Mammary epithelial cell (primary cell): ENCODE measurements at regions of chr2 and their contacts with region 1.

Region 1: DNA sequence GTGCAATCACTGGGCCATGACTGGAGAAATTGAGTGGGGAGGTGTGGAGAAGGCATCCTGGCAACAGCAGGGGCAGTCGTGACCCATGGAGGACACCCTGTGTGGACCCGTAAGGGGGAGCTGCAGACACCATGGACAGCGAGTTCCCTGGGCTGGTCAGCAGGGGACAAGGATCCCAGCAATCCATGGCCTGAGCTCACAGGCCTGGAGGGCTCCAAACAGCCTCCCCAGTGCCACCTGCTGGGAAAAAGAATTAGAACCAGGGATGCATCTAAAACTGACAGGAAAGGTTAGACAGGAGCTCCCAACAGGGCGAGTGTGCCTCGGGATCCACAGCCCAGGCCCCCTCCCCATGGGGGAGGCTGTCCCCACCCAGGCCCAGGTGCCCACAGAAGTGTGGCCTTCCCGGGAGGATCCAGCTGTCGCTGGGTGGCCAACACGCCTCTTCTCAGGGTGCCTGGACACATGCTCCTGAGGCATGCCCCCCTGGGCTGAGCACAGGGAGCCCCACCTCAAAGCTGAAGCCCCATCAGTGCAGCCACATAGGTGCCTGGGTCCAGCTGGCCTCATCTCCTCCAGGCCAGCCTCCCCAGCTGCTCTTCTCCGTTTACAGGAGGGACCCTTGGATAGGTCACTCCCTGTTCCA is 20.5 kb upstream of the KIF1A start:
- DNase-seq: peak; percentile 40
- H3K4me3 ChIP-seq: no peak overlapping the region
- H3K27ac ChIP-seq: no peak overlapping the region
- H3K4me1 ChIP-seq: no peaks in the 10 kb centered on the region
- H3K27me3 ChIP-seq: peaks cover 7% of the 10 kb centered on the region
- CTCF ChIP-seq: peak; percentile 58 to 76

Region 2: GRCh38 chr2:240060977-240061591 is 779.5 kb before region 1 on chr2:
- CTCF ChIA-PET with region 1: no interaction called
- dilution Hi-C with region 1: no loop called
- in situ Hi-C with region 1: no loop called
- intact Hi-C with region 1: loop called (anchors 2 kb)
- DNase-seq: peak; percentile 45
- H3K4me3 ChIP-seq: no peak overlapping the region
- H3K27ac ChIP-seq: no peak overlapping the region
- H3K4me1 ChIP-seq: no peaks in the 10 kb centered on the region
- H3K27me3 ChIP-seq: peaks cover 6% of the 10 kb centered on the region
- CTCF ChIP-seq: peak; percentile 37 to 74

Region 3: GRCh38 chr2:240560480-240561326 is 279.9 kb before region 1 on chr2:
- CTCF ChIA-PET with region 1: no interaction called
- dilution Hi-C with region 1: no loop called
- in situ Hi-C with region 1: no loop called
- intact Hi-C with region 1: loop called (anchors 5 kb)
- DNase-seq: peak; percentile 97
- H3K4me3 ChIP-seq: peak overlapping the region; percentile 64 to 78 (median 69)
- H3K27ac ChIP-seq: peak overlapping the region; percentile 73
- H3K4me1 ChIP-seq: peaks cover 39% of the 10 kb centered on the region
- H3K27me3 ChIP-seq: no peaks in the 10 kb centered on the region
- CTCF ChIP-seq: peak; percentile 9 to 23

Region 4: DNA sequence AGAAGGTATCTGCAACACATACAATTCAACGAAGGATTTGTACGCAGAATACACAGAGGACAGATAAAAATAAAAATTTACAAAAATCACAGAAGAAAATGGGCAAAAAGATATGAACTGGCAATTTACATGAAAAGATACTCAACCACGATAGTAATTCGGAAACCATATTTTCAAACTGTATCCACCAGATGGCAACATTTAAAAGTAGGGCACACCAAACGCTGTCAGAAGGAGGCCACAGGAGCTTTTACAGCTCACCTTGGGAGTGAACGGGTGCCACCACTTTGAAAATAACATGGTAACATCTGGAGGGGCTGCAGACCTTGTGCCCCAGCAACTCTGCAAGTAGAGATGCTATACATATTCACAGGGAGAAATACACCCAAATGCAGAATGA is 30.4 kb before region 1 on chr2:
- CTCF ChIA-PET with region 1: no interaction called
- dilution Hi-C with region 1: no loop called
- in situ Hi-C with region 1: no loop called
- intact Hi-C with region 1: loop called (anchors 1 kb)
- DNase-seq: no peak
- H3K4me3 ChIP-seq: no peak overlapping the region
- H3K27ac ChIP-seq: no peak overlapping the region
- H3K4me1 ChIP-seq: no peaks in the 10 kb centered on the region
- H3K27me3 ChIP-seq: no peaks in the 10 kb centered on the region
- CTCF ChIP-seq: peak in 1 of 2 donors; percentile 18

Region 5: DNA sequence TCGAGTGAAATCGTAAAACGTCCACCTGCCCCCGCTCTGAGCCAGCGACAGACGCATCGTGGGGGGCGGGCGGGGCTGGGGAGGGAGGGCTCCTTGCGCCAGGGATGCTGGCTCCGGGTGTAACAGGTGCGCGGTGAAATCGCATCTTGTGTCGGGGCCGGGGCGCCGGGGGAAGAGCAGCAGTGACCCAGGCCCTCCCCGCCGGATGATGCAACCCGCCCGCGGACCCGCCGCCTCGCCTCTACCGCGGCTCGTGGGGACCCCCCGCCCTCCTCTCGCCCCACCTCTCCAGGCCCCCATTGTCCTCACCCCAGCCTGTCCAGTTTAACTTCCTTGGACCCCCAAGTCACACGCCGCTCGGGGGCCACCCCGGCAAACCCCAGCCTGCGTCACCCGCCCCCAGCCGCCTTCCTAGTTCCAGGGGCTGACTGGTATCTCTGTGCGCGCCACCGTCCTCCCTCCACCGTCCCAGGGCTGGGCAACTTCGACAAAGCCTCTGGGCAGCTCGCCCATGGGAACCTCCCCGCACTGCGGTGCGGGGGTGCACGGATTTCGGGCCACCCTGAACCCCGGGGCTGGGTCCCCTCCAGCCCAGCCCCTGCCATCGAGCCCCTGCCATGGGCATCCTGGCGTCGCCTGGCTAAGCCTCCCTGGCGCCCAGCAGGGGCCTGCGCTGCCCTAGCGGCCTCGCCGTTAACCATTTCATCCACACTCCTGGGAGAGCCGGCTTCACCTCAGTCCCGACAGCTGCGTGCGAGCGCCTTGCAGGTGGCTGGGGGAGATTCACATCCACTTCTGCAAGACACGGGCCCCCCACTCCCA is 19.7 kb before region 1 on chr2:
- CTCF ChIA-PET with region 1: no interaction called
- dilution Hi-C with region 1: no loop called
- in situ Hi-C with region 1: no loop called
- intact Hi-C with region 1: no loop called
- DNase-seq: no peak
- H3K4me3 ChIP-seq: no peak overlapping the region
- H3K27ac ChIP-seq: no peak overlapping the region
- H3K4me1 ChIP-seq: no peaks in the 10 kb centered on the region
- H3K27me3 ChIP-seq: peaks cover 32% of the 10 kb centered on the region
- CTCF ChIP-seq: no peak